Heart right ventricle (tissue), 16 donors: ENCODE measurements at regions of chr11 and their contacts with region 1.

Region 1: GRCh38 chr11:90294091-90294490 is 71.2 kb upstream of the CHORDC1 start:
- DNase-seq: no peak
- ATAC-seq: no peak
- H3K4me3 ChIP-seq: no peak overlapping the region
- H3K27ac ChIP-seq: no peak overlapping the region
- H3K4me1 ChIP-seq: no peaks in the 10 kb centered on the region
- H3K27me3 ChIP-seq: no peaks in the 10 kb centered on the region
- CTCF ChIP-seq: no peak

Region 2: DNA sequence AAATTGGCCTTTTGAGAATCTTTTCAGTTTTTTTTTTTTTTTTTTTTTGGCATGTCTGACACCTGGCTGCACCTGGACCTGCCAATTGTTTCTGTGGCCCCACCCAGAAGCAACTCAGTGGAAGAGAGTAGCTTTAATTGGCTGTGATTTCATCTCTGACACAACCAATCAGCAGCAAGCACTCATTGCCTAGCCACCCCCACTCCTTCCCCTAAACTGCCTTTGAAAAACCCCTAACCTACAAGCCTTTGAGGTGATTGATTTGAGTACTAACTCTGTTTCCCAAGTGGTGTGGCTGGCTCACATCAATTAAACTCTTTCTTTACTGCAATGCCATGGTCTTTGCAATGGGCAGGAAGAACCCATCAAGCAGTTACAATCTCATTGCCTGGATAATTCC is 26.9 kb after region 1 on chr11:
- intact Hi-C with region 1: no loop called
- DNase-seq: no peak
- ATAC-seq: no peak
- H3K4me3 ChIP-seq: no peak overlapping the region
- H3K27ac ChIP-seq: no peak overlapping the region
- H3K4me1 ChIP-seq: no peaks in the 10 kb centered on the region
- H3K27me3 ChIP-seq: no peaks in the 10 kb centered on the region
- CTCF ChIP-seq: no peak

Region 3: GRCh38 chr11:90355200-90355599 is 61.1 kb after region 1 on chr11:
- intact Hi-C with region 1: loop called in 1 of 10 experiments (anchors 10 kb)
- DNase-seq: no peak
- ATAC-seq: peak in 1 of 8 donors; percentile 58
- H3K4me3 ChIP-seq: no peak overlapping the region
- H3K27ac ChIP-seq: no peak overlapping the region
- H3K4me1 ChIP-seq: peaks cover 0 to 4% (median 0%) of the 10 kb centered on the region in 9 donors
- H3K27me3 ChIP-seq: no peaks in the 10 kb centered on the region
- CTCF ChIP-seq: no peak

Region 4: GRCh38 chr11:90468923-90469322 is 174.8 kb after region 1 on chr11:
- intact Hi-C with region 1: loop called in 1 of 10 experiments (anchors 5 kb)
- DNase-seq: no peak
- ATAC-seq: peak in 5 of 8 donors; percentile 53 to 73 (median 58)
- H3K4me3 ChIP-seq: no peak overlapping the region
- H3K27ac ChIP-seq: no peak overlapping the region
- H3K4me1 ChIP-seq: peaks cover 0 to 7% (median 0%) of the 10 kb centered on the region in 9 donors
- H3K27me3 ChIP-seq: no peaks in the 10 kb centered on the region
- CTCF ChIP-seq: no peak

Region 5: GRCh38 chr11:90803378-90803777 is 509.3 kb after region 1 on chr11:
- intact Hi-C with region 1: no loop called
- DNase-seq: no peak
- ATAC-seq: no peak
- H3K4me3 ChIP-seq: no peak overlapping the region
- H3K27ac ChIP-seq: no peak overlapping the region
- H3K4me1 ChIP-seq: no peaks in the 10 kb centered on the region
- H3K27me3 ChIP-seq: no peaks in the 10 kb centered on the region
- CTCF ChIP-seq: no peak